ENCODE measurements at regions of chr10 and their contacts with region 1.

Region 1: GRCh38 chr10:100743626-100744135 is 1.7 kb upstream of the PAX2 start:
- DNase-seq: peak; percentile 79
- ATAC-seq: peak; percentile 61
- H3K4me3 ChIP-seq: no peak overlapping the region
- H3K4me3 Mint-ChIP-seq: peak overlapping the region; percentile 66
- H3K27ac ChIP-seq: no peak overlapping the region
- H3K27ac Mint-ChIP-seq: no peak overlapping the region
- H3K4me1 ChIP-seq: peaks cover 71 to 89% of the 10 kb centered on the region in 2 donors
- H3K4me1 Mint-ChIP-seq: peaks cover 52% of the 10 kb centered on the region
- H3K27me3 ChIP-seq: peaks cover 0 to 94% (median 73%) of the 10 kb centered on the region in 4 experiments
- H3K27me3 Mint-ChIP-seq: peaks cover 70% of the 10 kb centered on the region
- CTCF ChIP-seq: peak; percentile 69

Region 2: GRCh38 chr10:100562008-100562711 is 181.5 kb before region 1 on chr10:
- CTCF ChIA-PET with region 1: interaction called, 11 read pairs
- POLR2A ChIA-PET with region 1: no interaction called
- intact Hi-C with region 1: no loop called
- DNase-seq: peak; percentile 87
- ATAC-seq: peak; percentile 94
- H3K4me3 ChIP-seq: peak overlapping the region in 4 of 5 experiments; percentile 5 to 29 (median 13)
- H3K4me3 Mint-ChIP-seq: peak overlapping the region; percentile 69
- H3K27ac ChIP-seq: no peak overlapping the region
- H3K27ac Mint-ChIP-seq: no peak overlapping the region
- H3K4me1 ChIP-seq: peaks cover 17 to 20% of the 10 kb centered on the region in 2 donors
- H3K4me1 Mint-ChIP-seq: peaks cover 20% of the 10 kb centered on the region
- H3K27me3 ChIP-seq: peaks cover 0 to 37% (median 15%) of the 10 kb centered on the region in 4 experiments
- H3K27me3 Mint-ChIP-seq: peaks cover 52% of the 10 kb centered on the region
- CTCF ChIP-seq: peak; percentile 90

Region 3: GRCh38 chr10:100670828-100671479 is 72.7 kb before region 1 on chr10:
- CTCF ChIA-PET with region 1: interaction called, 17 read pairs
- POLR2A ChIA-PET with region 1: no interaction called
- intact Hi-C with region 1: loop called (anchors 1 kb)
- DNase-seq: peak; percentile 70
- ATAC-seq: peak; percentile 73
- H3K4me3 ChIP-seq: peak overlapping the region in 1 of 5 experiments; percentile 40
- H3K4me3 Mint-ChIP-seq: peak overlapping the region; percentile 48
- H3K27ac ChIP-seq: no peak overlapping the region
- H3K27ac Mint-ChIP-seq: no peak overlapping the region
- H3K4me1 ChIP-seq: peaks cover 5 to 6% of the 10 kb centered on the region in 2 donors
- H3K4me1 Mint-ChIP-seq: peaks cover 6% of the 10 kb centered on the region
- H3K27me3 ChIP-seq: peaks cover 0 to 72% (median 41%) of the 10 kb centered on the region in 4 experiments
- H3K27me3 Mint-ChIP-seq: peaks cover 58% of the 10 kb centered on the region
- CTCF ChIP-seq: peak; percentile 96

Region 4: GRCh38 chr10:100817268-100817839 is 73.7 kb after region 1 on chr10:
- CTCF ChIA-PET with region 1: no interaction called
- POLR2A ChIA-PET with region 1: no interaction called
- intact Hi-C with region 1: no loop called
- DNase-seq: no peak
- ATAC-seq: no peak
- H3K4me3 ChIP-seq: no peak overlapping the region
- H3K4me3 Mint-ChIP-seq: no peak overlapping the region
- H3K27ac ChIP-seq: no peak overlapping the region
- H3K27ac Mint-ChIP-seq: no peak overlapping the region
- H3K4me1 ChIP-seq: no peaks in the 10 kb centered on the region
- H3K4me1 Mint-ChIP-seq: no peaks in the 10 kb centered on the region
- H3K27me3 ChIP-seq: peaks cover 0 to 36% (median 5%) of the 10 kb centered on the region in 4 experiments
- H3K27me3 Mint-ChIP-seq: peaks cover 45% of the 10 kb centered on the region
- CTCF ChIP-seq: no peak

Region 5: DNA sequence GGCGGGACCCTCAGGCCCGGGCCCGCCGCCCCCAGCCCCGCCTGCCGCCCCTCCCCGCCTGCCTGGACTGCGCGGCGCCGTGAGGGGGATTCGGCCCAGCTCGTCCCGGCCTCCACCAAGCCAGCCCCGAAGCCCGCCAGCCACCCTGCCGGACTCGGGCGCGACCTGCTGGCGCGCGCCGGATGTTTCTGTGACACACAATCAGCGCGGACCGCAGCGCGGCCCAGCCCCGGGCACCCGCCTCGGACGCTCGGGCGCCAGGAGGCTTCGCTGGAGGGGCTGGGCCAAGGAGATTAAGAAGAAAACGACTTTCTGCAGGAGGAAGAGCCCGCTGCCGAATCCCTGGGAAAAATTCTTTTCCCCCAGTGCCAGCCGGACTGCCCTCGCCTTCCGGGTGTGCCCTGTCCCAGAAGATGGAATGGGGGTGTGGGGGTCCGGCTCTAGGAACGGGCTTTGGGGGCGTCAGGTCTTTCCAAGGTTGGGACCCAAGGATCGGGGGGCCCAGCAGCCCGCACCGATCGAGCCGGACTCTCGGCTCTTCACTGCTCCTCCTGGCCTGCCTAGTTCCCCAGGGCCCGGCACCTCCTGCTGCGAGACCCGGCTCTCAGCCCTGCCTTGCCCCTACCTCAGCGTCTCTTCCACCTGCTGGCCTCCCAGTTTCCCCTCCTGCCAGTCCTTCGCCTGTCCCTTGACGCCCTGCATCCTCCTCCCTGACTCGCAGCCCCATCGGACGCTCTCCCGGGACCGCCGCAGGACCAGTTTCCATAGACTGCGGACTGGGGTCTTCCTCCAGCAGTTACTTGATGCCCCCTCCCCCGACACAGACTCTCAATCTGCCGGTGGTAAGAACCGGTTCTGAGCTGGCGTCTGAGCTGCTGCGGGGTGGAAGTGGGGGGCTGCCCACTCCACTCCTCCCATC is 84.4 kb after region 1 on chr10:
- CTCF ChIA-PET with region 1: no interaction called
- POLR2A ChIA-PET with region 1: no interaction called
- intact Hi-C with region 1: loop called (anchors 5 kb)
- DNase-seq: peak; percentile 63
- ATAC-seq: peak; percentile 46
- H3K4me3 ChIP-seq: peak overlapping the region in 4 of 5 experiments; percentile 46 to 71 (median 62)
- H3K4me3 Mint-ChIP-seq: peak overlapping the region; percentile 87
- H3K27ac ChIP-seq: no peak overlapping the region
- H3K27ac Mint-ChIP-seq: peak overlapping the region; percentile 53
- H3K4me1 ChIP-seq: peaks cover 49 to 54% of the 10 kb centered on the region in 2 donors
- H3K4me1 Mint-ChIP-seq: peaks cover 43% of the 10 kb centered on the region
- H3K27me3 ChIP-seq: peaks cover 0 to 91% (median 59%) of the 10 kb centered on the region in 4 experiments
- H3K27me3 Mint-ChIP-seq: peaks cover 75% of the 10 kb centered on the region
- CTCF ChIP-seq: no peak

Region 6: GRCh38 chr10:101130984-101131961 is 387.6 kb after region 1 on chr10 and contains the start of gene TLX1:
- CTCF ChIA-PET with region 1: no interaction called
- POLR2A ChIA-PET with region 1: no interaction called
- intact Hi-C with region 1: loop called (anchors 10 kb)
- DNase-seq: peak; percentile 51
- ATAC-seq: peak; percentile 33
- H3K4me3 ChIP-seq: peak within 1 kb of the TSS in 3 of 5 experiments; percentile 15 to 27 (median 25)
- H3K4me3 Mint-ChIP-seq: peak within 1 kb of the TSS; percentile 64
- H3K27ac ChIP-seq: no peak within 1 kb of the TSS
- H3K27ac Mint-ChIP-seq: no peak within 1 kb of the TSS
- H3K4me1 ChIP-seq: peaks cover 48 to 65% of the 10 kb centered on the region in 2 donors
- H3K4me1 Mint-ChIP-seq: peaks cover 35% of the 10 kb centered on the region
- H3K27me3 ChIP-seq: peaks cover 0 to 93% (median 75%) of the 10 kb centered on the region in 4 experiments
- H3K27me3 Mint-ChIP-seq: peaks cover 72% of the 10 kb centered on the region
- CTCF ChIP-seq: no peak
- total RNA-seq, gene TLX1: not detected in 2 replicates

Region 7: DNA sequence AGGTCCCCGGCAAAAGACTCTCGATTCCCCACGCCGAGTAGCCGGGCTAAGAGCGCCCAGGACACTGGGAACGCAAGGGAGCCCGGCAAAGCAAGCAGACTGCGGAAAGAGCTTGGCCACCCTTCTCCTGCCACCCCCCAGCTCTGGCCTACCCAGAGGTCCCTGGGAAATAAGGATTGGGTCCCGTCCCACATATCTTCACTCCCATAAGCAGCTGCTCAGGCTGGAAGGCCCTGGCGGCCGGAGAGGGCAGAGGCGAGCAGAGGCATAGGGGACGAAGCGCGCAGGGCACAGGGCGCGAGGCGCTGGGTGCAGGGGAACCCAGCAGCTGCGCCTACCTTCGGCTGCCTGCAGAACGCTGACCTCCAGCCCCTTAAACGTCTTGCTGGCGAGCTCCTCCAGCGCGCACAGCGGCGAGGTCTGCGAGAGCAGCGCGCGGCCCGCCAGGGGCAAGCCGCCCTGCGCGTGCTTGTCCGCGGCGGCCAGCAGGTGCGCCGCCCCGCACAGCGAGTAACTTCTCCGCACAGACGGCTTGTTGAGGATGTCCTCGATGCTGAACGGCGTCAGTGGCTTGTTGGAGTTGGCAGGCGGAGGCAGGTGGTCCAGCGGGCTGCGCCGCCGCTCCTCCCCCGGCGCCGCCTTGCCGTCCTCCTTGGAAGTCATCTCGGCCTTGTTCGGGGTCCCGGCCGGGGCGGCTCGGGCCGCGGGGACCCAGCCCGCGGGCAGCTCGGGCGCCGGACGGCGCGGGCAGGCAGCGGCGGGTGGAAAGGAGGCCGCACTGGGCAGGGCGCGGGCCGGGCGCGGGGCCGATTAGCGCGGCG is 484.7 kb after region 1 on chr10:
- CTCF ChIA-PET with region 1: no interaction called
- POLR2A ChIA-PET with region 1: no interaction called
- intact Hi-C with region 1: loop called (anchors 10 kb)
- DNase-seq: no peak
- ATAC-seq: no peak
- H3K4me3 ChIP-seq: no peak overlapping the region
- H3K4me3 Mint-ChIP-seq: peak overlapping the region; percentile 73
- H3K27ac ChIP-seq: no peak overlapping the region
- H3K27ac Mint-ChIP-seq: peak overlapping the region; percentile 46
- H3K4me1 ChIP-seq: peaks cover 53 to 79% of the 10 kb centered on the region in 2 donors
- H3K4me1 Mint-ChIP-seq: peaks cover 41% of the 10 kb centered on the region
- H3K27me3 ChIP-seq: peaks cover 0 to 90% (median 77%) of the 10 kb centered on the region in 4 experiments
- H3K27me3 Mint-ChIP-seq: peaks cover 65% of the 10 kb centered on the region
- CTCF ChIP-seq: no peak